ENCODE measurements at regions of chr9 and their contacts with region 1.

Region 1: GRCh38 chr9:130860458-130861316 is 25.6 kb downstream of the ABL1 start:
- DNase-seq: peak in 6 of 10 donors; percentile 49 to 69 (median 58)
- H3K4me3 ChIP-seq: peak overlapping the region in 6 of 59 donors; percentile 1 to 20 (median 10)
- H3K27ac ChIP-seq: peak overlapping the region in 49 of 59 donors; percentile 1 to 80 (median 46)
- H3K27me3 ChIP-seq: no peaks in the 10 kb centered on the region
- CTCF ChIP-seq: peak in 54 of 56 donors; percentile 14 to 71 (median 48)

Region 2: GRCh38 chr9:130701056-130702022 is 159.3 kb before region 1 on chr9:
- intact Hi-C with region 1: loop called (anchors 2 to 5 kb)
- DNase-seq: peak; percentile 51 to 80 (median 73)
- H3K4me3 ChIP-seq: peak overlapping the region in 2 of 59 donors; percentile 2 to 7
- H3K27ac ChIP-seq: peak overlapping the region in 51 of 59 donors; percentile 5 to 80 (median 63)
- H3K27me3 ChIP-seq: no peaks in the 10 kb centered on the region
- CTCF ChIP-seq: peak; percentile 78 to 98 (median 94)

Region 3: DNA sequence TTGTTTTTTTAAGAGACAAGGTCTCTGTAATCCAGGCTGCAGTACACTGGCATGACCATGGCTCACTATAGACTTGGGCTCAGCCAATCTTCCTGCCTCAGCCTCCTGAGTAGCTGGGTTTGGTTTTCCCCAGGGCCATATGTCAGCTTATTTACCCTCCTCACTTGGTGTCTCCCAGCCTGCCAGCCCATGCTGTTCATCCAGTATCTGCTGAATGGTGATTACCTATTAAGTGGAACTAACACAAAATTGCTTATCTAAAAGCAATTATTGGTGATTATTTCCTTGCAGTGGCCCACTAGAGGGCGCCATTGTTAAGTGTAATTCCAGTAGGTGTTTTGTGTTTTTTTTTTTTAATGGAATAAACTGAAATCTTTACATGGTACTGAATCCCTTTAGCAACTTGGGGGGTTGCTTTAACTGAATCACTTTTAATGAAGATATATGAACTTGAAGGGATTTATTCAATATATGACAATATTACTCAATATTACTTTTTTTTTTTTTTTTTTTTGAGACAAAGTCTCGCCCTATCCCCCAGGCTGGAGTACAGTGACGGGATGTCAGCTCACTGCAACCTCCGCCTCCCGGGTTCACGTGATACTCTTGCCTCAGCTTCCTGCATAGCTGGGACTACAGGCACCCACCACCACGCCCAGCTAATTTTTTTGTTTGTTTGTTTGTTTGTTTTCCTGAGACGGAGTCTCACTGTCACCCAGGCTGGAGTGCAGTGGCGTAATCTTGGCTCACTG is 153.3 kb before region 1 on chr9:
- intact Hi-C with region 1: loop called (anchors 2 to 5 kb)
- DNase-seq: peak in 5 of 10 donors; percentile 28 to 66 (median 47)
- H3K4me3 ChIP-seq: no peak overlapping the region
- H3K27ac ChIP-seq: peak overlapping the region in 1 of 59 donors; percentile 20
- H3K27me3 ChIP-seq: no peaks in the 10 kb centered on the region
- CTCF ChIP-seq: peak; percentile 70 to 94 (median 83)

Region 4: GRCh38 chr9:130770679-130771442 is 89.8 kb before region 1 on chr9:
- intact Hi-C with region 1: loop called (anchors 1 to 2 kb)
- DNase-seq: no peak
- H3K4me3 ChIP-seq: no peak overlapping the region
- H3K27ac ChIP-seq: no peak overlapping the region
- H3K27me3 ChIP-seq: no peaks in the 10 kb centered on the region
- CTCF ChIP-seq: peak; percentile 53 to 87 (median 75)

Measured in dorsolateral prefrontal cortex (tissue), 120 donors.